Esophagus muscularis mucosa (tissue), 4 donors: ENCODE measurements at regions of chr3 and their contacts with region 1.

Region 1: GRCh38 chr3:10945683-10946287 is 46.8 kb upstream of the SLC6A1 start:
- DNase-seq: no peak
- H3K4me3 ChIP-seq: no peak overlapping the region
- H3K27ac ChIP-seq: no peak overlapping the region
- H3K4me1 ChIP-seq: no peaks in the 10 kb centered on the region
- H3K27me3 ChIP-seq: peaks cover 0 to 36% (median 0%) of the 10 kb centered on the region in 4 donors
- CTCF ChIP-seq: peak; percentile 53 to 87 (median 75)
- EP300 ChIP-seq: no peak
- POLR2A ChIP-seq: no peak

Region 2: GRCh38 chr3:10764259-10765051 is 181.3 kb before region 1 on chr3:
- intact Hi-C with region 1: loop called (anchors 10 kb)
- DNase-seq: no peak
- H3K4me3 ChIP-seq: no peak overlapping the region
- H3K27ac ChIP-seq: no peak overlapping the region
- H3K4me1 ChIP-seq: no peaks in the 10 kb centered on the region
- H3K27me3 ChIP-seq: peaks cover 0 to 64% (median 3%) of the 10 kb centered on the region in 4 donors
- CTCF ChIP-seq: no peak
- EP300 ChIP-seq: no peak
- POLR2A ChIP-seq: no peak

Region 3: DNA sequence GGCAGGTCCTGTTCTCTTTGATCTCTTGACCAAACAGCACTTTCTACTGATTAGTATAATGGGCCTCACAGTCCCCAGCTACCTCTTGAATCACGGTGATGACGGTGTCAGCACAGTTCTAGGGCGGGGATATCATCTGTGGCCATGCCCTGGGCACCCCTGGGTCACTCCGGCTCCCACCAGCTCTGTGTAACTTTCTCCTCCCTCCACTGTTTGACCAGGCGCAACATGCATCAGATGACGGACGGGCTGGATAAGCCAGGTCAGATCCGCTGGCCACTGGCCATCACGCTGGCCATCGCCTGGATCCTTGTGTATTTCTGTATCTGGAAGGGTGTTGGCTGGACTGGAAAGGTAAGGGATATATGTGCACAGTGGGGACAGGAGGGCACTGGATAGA is 76.3 kb after region 1 on chr3:
- intact Hi-C with region 1: no loop called
- DNase-seq: no peak
- H3K4me3 ChIP-seq: no peak overlapping the region
- H3K27ac ChIP-seq: no peak overlapping the region
- H3K4me1 ChIP-seq: no peaks in the 10 kb centered on the region
- H3K27me3 ChIP-seq: peaks cover 0 to 31% (median 0%) of the 10 kb centered on the region in 4 donors
- CTCF ChIP-seq: no peak
- EP300 ChIP-seq: no peak
- POLR2A ChIP-seq: no peak

Region 4: DNA sequence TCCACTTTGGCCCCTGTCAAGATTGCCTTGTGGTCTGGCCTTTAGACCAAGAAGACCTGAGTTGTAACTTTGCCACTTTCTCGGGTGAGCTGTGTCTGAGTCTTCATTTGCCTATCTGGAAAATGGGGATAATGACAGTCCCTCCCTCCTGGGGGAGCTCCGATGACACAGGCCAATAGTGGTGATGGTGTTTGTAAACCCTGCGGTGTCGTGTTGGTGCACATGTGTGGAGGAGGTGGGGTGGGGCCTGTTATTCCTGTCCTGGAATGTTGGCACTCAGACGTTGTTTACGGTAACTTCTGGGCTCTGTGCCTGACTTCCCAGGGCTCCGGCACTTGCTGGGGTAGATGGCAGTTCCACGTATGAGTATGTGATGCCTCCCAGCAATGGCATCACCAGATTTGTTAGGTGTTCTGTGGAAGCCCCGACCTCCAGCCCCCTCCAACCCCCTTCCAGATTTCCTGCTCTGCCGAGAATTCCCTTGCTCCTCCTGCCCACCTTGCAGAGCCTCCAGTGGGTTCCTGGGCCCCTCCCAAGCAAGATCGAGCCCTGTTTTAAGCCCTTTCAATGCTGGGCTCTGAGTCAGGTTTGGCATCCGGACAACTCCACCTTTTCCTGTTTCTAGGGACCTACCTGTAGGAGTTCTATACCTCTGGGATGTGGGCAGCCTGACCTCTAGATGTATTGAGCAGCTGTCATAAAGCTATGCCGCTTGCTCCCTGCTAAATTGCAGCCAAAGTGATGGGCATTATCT is 240.0 kb after region 1 on chr3:
- intact Hi-C with region 1: no loop called
- DNase-seq: peak; percentile 95
- H3K4me3 ChIP-seq: peak overlapping the region in 1 of 4 donors; percentile 29
- H3K27ac ChIP-seq: peak overlapping the region; percentile 61 to 75 (median 66)
- H3K4me1 ChIP-seq: peaks cover 21 to 34% (median 31%) of the 10 kb centered on the region in 4 donors
- H3K27me3 ChIP-seq: no peaks in the 10 kb centered on the region
- CTCF ChIP-seq: no peak
- EP300 ChIP-seq: peak; percentile 66
- POLR2A ChIP-seq: no peak

Region 5: GRCh38 chr3:11335056-11335608 is 389.3 kb after region 1 on chr3:
- intact Hi-C with region 1: loop called (anchors 10 kb)
- DNase-seq: no peak
- H3K4me3 ChIP-seq: no peak overlapping the region
- H3K27ac ChIP-seq: no peak overlapping the region
- H3K4me1 ChIP-seq: no peaks in the 10 kb centered on the region
- H3K27me3 ChIP-seq: no peaks in the 10 kb centered on the region
- CTCF ChIP-seq: peak; percentile 51 to 71 (median 61)
- EP300 ChIP-seq: no peak
- POLR2A ChIP-seq: no peak